CD4-positive, alpha-beta T cell (primary cell): ENCODE measurements at regions of chr11 and their contacts with region 1.

Region 1: DNA sequence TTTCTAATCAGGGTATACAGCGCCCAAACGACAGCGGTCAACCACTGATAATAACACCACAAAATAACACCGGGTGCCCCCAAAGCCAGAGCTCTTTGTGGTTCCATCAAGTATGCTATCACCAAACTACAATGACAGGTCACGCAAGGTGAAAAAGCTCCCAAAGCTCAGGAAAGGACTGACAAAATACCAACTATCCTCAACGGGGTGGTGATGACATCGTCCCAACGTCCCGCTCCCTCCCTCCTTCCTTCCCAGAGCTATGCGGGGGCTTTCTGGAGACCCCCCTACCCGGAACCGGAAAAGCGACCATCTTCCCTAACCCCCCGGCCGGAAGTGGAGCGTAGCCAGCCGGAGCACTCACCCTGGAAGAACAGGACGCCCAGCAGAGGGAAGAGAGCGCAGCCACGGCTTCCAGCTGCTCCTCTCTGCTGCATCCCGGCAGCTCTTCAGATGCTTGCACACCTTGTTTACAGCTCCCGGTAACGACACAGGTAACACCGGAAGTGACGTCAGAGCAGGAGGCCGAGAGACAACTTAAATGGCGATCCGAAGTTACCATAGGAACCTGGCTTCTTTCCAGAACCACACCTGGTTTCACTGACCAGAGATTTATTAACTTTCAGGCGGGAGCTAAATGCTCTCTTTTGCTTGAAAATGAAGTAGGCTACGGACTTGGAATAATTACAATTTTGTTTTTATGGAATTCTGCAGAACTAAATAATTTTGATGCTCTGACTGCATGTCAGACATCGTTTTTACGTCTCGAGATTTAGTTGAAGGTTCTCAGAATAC is at the start of gene MPZL3:
- DNase-seq: peak; percentile 72 to 96 (median 79)
- ATAC-seq: peak; percentile 86
- H3K4me3 ChIP-seq: peak within 1 kb of the TSS; percentile 79
- H3K4me3 Mint-ChIP-seq: peak within 1 kb of the TSS; percentile 96
- H3K27ac ChIP-seq: peak within 1 kb of the TSS; percentile 91 to 94
- H3K27ac Mint-ChIP-seq: peak within 1 kb of the TSS; percentile 98
- H3K4me1 ChIP-seq: peaks cover 13% of the 10 kb centered on the region
- H3K4me1 Mint-ChIP-seq: peaks cover 49% of the 10 kb centered on the region
- H3K27me3 ChIP-seq: no peaks in the 10 kb centered on the region
- H3K27me3 Mint-ChIP-seq: no peaks in the 10 kb centered on the region
- CTCF ChIP-seq: no peak
- total RNA-seq, gene MPZL3: 29.0 to 30.2 TPM

Region 2: DNA sequence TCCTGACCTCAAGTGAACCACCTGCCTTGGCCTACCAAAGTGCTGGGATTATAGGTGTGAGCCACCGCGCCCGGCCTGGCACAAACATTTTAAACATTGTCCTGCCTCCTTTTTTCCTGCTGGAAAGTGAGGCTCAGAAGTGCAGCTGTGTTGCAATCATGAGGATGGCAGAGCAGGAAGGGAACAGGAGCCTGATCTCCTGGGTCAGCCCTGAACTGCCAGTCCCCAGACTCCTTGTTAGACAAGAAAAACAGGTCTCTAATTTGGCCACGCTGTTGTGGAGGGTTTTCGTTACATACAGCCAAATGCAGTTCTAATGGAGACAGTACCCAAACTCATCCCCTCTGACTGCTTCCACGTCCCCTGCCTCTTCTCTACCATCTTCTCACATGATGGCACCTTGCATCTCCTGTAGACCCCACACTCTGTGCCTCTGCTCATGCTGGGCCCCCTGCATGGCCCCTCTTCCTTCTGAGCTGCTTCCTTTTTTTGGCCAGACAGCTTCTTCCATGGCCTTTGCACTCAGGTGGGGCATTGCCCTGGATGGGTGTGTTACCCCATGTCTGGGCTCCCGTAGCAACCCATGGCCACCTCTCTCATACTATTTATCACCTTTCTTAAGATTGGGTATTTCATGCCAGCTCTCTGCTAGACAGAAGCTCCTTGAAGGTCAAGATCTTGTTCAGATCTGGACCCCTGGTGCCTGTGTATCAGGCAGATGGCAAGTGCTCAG is 697.3 kb before region 1 on chr11:
- CTCF ChIA-PET with region 1: no interaction called
- POLR2A ChIA-PET with region 1: no interaction called
- intact Hi-C with region 1: no loop called
- DNase-seq: no peak
- ATAC-seq: no peak
- H3K4me3 ChIP-seq: no peak overlapping the region
- H3K4me3 Mint-ChIP-seq: no peak overlapping the region
- H3K27ac ChIP-seq: no peak overlapping the region
- H3K27ac Mint-ChIP-seq: no peak overlapping the region
- H3K4me1 ChIP-seq: no peaks in the 10 kb centered on the region
- H3K4me1 Mint-ChIP-seq: no peaks in the 10 kb centered on the region
- H3K27me3 ChIP-seq: peaks cover 0 to 9% of the 10 kb centered on the region in 2 experiments
- H3K27me3 Mint-ChIP-seq: peaks cover 5% of the 10 kb centered on the region
- CTCF ChIP-seq: no peak

Region 3: DNA sequence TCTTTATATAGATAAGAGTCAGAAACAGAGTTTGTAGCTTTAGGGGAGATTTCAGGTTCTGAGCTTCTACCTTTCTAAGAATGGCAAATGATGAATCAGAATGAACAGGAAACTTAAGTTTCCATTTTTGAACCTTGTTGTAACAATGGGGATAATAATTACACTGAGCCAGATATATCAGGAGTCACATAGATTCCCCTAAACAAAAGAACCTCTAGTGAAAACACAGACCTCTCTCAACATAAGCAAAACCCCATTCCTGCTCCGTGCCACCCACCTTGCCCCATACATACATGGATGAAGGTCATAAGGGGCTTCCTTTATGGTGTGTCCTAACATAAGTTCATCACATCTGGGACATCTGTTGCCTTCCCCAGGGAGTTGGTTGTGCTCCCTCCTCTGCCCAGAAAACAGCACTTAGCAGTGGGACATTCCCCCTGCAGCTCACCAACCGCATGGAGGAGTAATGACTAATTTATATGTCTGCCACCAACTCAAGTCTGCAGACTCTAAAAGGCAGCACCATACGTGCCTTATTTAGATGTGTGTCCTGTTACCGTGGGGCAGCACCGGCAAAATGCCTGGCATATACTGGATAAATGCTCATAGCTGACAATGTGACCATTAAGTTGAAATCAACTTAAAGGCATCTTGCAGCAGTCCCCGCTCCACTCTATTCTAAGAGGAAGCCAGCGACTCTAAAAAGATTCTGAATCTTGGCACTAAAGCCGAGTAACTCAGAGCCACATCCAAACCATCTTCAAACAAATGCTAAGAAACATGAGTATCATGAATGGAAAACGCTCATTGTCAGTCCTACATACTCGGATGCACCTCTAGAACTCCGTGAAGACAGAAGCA is 35.2 kb before region 1 on chr11:
- CTCF ChIA-PET with region 1: interaction called, 5 read pairs
- POLR2A ChIA-PET with region 1: interaction called, 8 read pairs
- intact Hi-C with region 1: loop called (anchors 5 kb)
- DNase-seq: peak in 11 of 14 experiments; percentile 19 to 80 (median 37)
- ATAC-seq: peak; percentile 75
- H3K4me3 ChIP-seq: peak overlapping the region; percentile 40
- H3K4me3 Mint-ChIP-seq: peak overlapping the region; percentile 84
- H3K27ac ChIP-seq: peak overlapping the region; percentile 10 to 52
- H3K27ac Mint-ChIP-seq: no peak overlapping the region
- H3K4me1 ChIP-seq: peaks cover 89% of the 10 kb centered on the region
- H3K4me1 Mint-ChIP-seq: peaks cover 99% of the 10 kb centered on the region
- H3K27me3 ChIP-seq: no peaks in the 10 kb centered on the region
- H3K27me3 Mint-ChIP-seq: no peaks in the 10 kb centered on the region
- CTCF ChIP-seq: no peak

Region 4: GRCh38 chr11:118240999-118241768 is 10.9 kb before region 1 on chr11:
- CTCF ChIA-PET with region 1: interaction called, 4 read pairs
- POLR2A ChIA-PET with region 1: interaction called, 19 read pairs
- intact Hi-C with region 1: no loop called
- DNase-seq: peak in 11 of 14 experiments; percentile 22 to 90 (median 55)
- ATAC-seq: peak; percentile 96
- H3K4me3 ChIP-seq: peak overlapping the region; percentile 21
- H3K4me3 Mint-ChIP-seq: peak overlapping the region; percentile 71
- H3K27ac ChIP-seq: peak overlapping the region; percentile 42 to 79
- H3K27ac Mint-ChIP-seq: peak overlapping the region; percentile 89
- H3K4me1 ChIP-seq: peaks cover 49% of the 10 kb centered on the region
- H3K4me1 Mint-ChIP-seq: peaks cover 70% of the 10 kb centered on the region
- H3K27me3 ChIP-seq: no peaks in the 10 kb centered on the region
- H3K27me3 Mint-ChIP-seq: no peaks in the 10 kb centered on the region
- CTCF ChIP-seq: no peak

Region 5: GRCh38 chr11:118263695-118264567 is 11.9 kb after region 1 on chr11 and contains the start of gene MPZL2:
- CTCF ChIA-PET with region 1: interaction called, 4 read pairs
- POLR2A ChIA-PET with region 1: interaction called, 16 read pairs
- intact Hi-C with region 1: no loop called
- DNase-seq: peak in 7 of 14 experiments; percentile 12 to 66 (median 30)
- ATAC-seq: peak; percentile 77
- H3K4me3 ChIP-seq: peak within 1 kb of the TSS; percentile 40
- H3K4me3 Mint-ChIP-seq: peak within 1 kb of the TSS; percentile 90
- H3K27ac ChIP-seq: no peak within 1 kb of the TSS
- H3K27ac Mint-ChIP-seq: peak within 1 kb of the TSS; percentile 86
- H3K4me1 ChIP-seq: peaks cover 17% of the 10 kb centered on the region
- H3K4me1 Mint-ChIP-seq: peaks cover 48% of the 10 kb centered on the region
- H3K27me3 ChIP-seq: no peaks in the 10 kb centered on the region
- H3K27me3 Mint-ChIP-seq: no peaks in the 10 kb centered on the region
- CTCF ChIP-seq: no peak
- total RNA-seq, gene MPZL2: 0.95 to 1.8 TPM